HEK293T (cell line): ENCODE measurements at regions of chrX and their contacts with region 1.

Region 1: GRCh38 chrX:73963682-73964081 is 340.3 kb upstream of the ZCCHC13 start:
- DNase-seq: no peak

Region 2: DNA sequence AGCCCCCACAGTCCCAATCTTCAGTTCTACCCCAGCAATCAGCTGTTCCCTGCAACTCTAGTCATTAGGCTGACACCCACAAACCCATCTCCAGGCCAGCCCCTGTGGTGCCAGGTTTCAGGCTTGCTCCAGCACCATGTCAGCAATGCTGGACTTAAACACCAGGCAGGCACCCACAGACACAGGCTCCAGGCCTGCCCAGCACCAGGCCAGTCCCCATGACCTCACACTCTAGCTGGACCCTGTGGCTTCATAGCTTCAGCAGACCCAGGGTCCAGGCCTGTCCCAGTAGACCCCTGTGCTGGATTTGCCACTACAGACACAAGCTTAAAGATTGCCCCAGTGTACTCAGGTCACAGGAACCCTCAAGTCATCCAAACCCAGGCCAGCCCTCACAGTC is 100.4 kb before region 1 on chrX:
- CTCF ChIA-PET with region 1: interaction called, 11 read pairs
- POLR2A ChIA-PET with region 1: no interaction called
- DNase-seq: no peak

Region 3: DNA sequence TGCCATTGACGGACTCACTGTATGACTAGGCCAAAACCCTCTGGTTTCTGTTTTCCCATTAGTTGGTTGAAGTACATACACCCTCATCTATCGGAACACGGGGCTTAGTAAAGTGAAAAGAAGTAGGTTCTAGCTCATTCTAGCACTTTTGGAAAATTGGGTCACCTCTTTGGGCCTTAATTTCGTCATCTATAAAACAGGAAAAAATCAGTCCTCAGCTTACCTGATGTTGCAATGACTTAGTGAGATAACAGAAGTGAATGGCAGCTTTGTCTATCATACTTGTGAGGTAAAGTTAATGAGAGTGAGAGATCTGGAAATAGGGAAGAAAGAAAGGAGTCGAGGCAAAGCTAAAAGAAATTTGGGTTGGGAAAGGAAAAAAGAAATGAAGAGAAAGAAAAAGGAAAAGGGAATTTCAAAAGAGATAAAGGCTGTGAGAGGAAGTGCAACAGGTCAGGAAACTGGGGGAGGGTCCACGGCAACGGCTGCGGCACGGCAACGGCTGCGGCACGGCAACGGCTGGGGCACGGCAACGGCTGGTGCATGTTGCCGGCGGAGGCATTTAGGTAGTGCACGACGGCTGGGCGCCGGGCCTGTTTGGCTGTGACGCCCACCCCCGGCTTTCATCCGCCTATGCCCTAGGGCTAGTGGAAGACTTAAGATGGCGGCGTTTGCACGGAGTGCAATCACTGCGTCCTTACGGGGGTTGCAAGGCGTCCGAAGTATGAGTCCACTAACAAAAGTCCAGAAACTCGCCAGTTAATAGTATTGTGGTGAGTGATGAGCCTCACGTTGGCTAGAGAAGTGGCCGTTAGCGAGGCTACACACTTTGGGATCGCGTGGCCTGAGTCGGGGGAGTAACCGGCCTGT is 19.8 kb before region 1 on chrX:
- CTCF ChIA-PET with region 1: no interaction called
- POLR2A ChIA-PET with region 1: no interaction called
- DNase-seq: peak; percentile 93